ENCODE measurements at regions of chr7 and their contacts with region 1.

Region 1: DNA sequence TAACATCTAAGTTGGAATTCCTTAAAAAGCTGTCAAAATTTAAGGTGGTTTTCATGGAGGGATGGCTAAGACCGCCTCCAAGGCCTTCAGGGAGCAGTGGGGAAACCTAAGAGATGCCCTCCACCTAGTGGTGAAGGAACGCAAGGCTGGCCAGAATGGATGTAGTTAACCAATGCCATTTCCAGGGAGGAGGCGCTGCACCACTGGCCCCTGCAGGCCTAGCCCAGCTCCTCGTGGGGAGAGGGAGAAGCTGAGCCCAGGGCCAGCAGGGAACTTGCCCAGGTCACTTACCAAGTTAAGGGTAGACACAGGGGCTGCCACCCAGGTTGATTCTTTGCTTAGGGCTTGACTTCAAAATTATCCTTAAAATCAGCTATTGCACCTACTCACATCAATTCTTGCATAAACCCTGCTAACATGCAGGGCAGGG is 32.0 kb downstream of the FIGNL1 start:
- DNase-seq: peak; percentile 64
- H3K4me3 Mint-ChIP-seq: no peak overlapping the region
- H3K27ac Mint-ChIP-seq: no peak overlapping the region
- H3K4me1 Mint-ChIP-seq: peaks cover 32% of the 10 kb centered on the region
- H3K27me3 Mint-ChIP-seq: no peaks in the 10 kb centered on the region

Region 2: GRCh38 chr7:50119815-50120637 is 298.1 kb before region 1 on chr7:
- intact Hi-C with region 1: loop called (anchors 1 kb)
- DNase-seq: peak; percentile 13
- H3K4me3 Mint-ChIP-seq: no peak overlapping the region
- H3K27ac Mint-ChIP-seq: no peak overlapping the region
- H3K4me1 Mint-ChIP-seq: no peaks in the 10 kb centered on the region
- H3K27me3 Mint-ChIP-seq: peaks cover 33% of the 10 kb centered on the region

Region 3: GRCh38 chr7:50317221-50317678 is 100.9 kb before region 1 on chr7:
- intact Hi-C with region 1: loop called (anchors 2 kb)
- DNase-seq: peak; percentile 53
- H3K4me3 Mint-ChIP-seq: peak overlapping the region; percentile 82
- H3K27ac Mint-ChIP-seq: peak overlapping the region; percentile 93
- H3K4me1 Mint-ChIP-seq: peaks cover 100% of the 10 kb centered on the region
- H3K27me3 Mint-ChIP-seq: no peaks in the 10 kb centered on the region

Region 4: DNA sequence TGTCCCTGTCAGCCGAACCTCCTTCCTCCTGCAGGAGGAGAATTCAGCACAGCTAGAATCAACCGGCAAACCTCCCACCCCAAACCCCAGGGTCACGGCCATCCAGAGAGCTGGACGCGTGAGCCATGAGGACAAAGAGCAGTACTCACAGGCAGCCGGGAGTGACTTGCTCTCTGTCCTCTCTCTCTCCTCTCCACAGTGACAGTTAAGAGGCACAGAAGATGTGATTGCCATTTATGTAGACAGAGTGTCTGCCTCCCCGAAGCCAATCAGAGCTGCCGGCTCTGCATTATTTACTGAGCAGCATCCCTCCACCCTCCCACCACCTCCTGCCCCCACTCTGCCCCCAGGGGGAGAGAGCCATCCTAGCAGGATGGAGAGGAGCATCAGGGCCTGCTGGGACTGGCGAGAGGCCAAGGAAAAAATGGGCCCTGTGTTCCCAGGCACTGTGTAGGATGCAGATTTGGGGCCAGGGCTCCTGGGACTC is 142.8 kb after region 1 on chr7:
- intact Hi-C with region 1: no loop called
- DNase-seq: no peak
- H3K4me3 Mint-ChIP-seq: no peak overlapping the region
- H3K27ac Mint-ChIP-seq: no peak overlapping the region
- H3K4me1 Mint-ChIP-seq: no peaks in the 10 kb centered on the region
- H3K27me3 Mint-ChIP-seq: peaks cover 19% of the 10 kb centered on the region

Measured in activated T-helper 1 cell treated with anti-CD3 and anti-CD28 coated beads, Interleukin-12 subunit alpha, Interleukin-12 subunit beta, Interleukin-2, Interleukin-4 antibody, amounts not matched to agents 30 ng/mL and 10 ng/mL and 1 ng/mL, durations not matched to agents 14 hours and 24 hours and 36 hours (primary cell).